ENCODE measurements at regions of chr22 and their contacts with region 1.

Region 1: GRCh38 chr22:37244114-37244921 is at the start of gene RAC2:
- DNase-seq: peak; percentile 95
- H3K4me3 Mint-ChIP-seq: peak within 1 kb of the TSS; percentile 100
- H3K27ac Mint-ChIP-seq: peak within 1 kb of the TSS; percentile 97
- H3K4me1 Mint-ChIP-seq: peaks cover 51% of the 10 kb centered on the region
- H3K27me3 Mint-ChIP-seq: no peaks in the 10 kb centered on the region
- total RNA-seq, gene RAC2: 984 to 1,005 TPM

Region 2: DNA sequence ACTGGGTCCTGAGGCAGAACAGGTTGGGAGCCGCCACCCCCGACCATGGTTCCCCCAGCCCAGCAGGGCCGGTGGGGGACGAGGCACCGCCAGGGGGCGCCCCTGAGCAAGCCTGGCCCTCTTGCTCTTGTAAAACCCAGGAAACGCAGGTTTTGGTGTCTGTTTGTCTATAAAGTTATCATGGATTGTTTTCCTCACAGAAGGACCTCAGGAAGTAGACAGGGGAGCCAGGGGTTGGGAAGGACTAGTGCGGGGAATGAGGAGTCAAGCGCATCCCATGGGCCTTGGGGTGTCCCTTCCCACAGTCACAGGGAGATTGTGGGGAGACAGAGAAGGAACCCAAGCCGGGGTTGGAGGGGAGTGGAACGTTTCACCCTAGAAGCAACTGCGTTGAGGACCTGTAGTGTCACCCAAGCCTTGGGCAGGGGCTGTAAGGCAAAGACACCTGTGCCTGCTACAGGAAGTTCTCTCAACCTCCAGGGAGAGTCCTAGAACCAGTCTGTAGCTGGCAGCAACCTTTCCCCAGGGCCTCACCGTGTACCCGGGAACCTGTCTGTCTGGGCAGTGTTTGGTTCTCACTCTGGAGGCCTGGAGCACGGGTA is 166.3 kb before region 1 on chr22:
- CTCF ChIA-PET with region 1: interaction called, 10 read pairs
- POLR2A ChIA-PET with region 1: interaction called, 50 read pairs
- DNase-seq: peak; percentile 88
- H3K4me3 Mint-ChIP-seq: peak overlapping the region; percentile 1
- H3K27ac Mint-ChIP-seq: peak overlapping the region; percentile 100
- H3K4me1 Mint-ChIP-seq: peaks cover 69% of the 10 kb centered on the region
- H3K27me3 Mint-ChIP-seq: no peaks in the 10 kb centered on the region

Region 3: DNA sequence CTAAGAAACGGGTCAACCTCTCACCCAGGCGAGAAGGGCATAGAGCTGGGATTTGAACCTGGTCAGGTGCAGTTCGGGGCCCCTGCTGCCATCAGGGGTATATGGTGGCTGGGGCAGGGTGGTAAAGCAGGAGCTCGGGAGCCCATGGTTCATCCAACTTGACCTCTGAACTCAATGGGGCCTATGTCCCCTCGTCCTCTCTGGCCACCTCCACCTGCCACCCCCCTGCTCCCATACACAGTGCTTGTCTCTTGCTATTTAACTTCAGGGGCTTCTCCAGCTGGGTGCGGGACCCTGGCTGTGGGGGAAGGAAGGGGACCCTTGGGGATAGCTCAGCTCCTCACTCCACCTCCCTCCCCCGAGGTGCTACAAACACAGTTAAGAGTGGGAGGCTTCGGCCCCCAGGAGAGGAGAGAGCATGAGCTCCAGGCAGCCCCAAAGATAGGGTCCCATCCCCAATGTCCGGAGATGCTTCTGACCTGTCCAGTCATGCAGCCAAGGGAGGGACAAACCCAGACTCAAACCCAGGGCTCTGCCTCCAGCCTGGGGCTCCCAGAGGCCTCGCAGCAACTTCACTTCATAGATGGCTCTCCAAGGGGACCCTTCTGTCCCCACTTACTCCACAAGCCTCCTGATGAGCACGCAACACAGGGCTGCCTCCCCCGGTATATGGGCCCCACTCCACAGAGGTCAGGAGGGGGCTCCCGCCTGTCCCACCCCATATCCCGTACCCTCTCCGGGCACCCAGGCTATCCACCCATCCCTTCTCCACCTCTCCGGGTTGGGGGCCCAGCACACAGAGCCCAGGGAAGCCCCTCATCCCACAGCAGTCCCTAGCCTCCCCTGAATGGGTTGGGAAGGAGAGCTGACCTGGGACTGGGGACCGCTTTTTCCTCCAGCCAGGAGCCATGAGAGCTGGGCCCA is 95.3 kb before region 1 on chr22:
- CTCF ChIA-PET with region 1: interaction called, 5 read pairs
- POLR2A ChIA-PET with region 1: interaction called, 29 read pairs
- DNase-seq: no peak
- H3K4me3 Mint-ChIP-seq: peak overlapping the region; percentile 98
- H3K27ac Mint-ChIP-seq: peak overlapping the region; percentile 89
- H3K4me1 Mint-ChIP-seq: peaks cover 59% of the 10 kb centered on the region
- H3K27me3 Mint-ChIP-seq: no peaks in the 10 kb centered on the region

Region 4: DNA sequence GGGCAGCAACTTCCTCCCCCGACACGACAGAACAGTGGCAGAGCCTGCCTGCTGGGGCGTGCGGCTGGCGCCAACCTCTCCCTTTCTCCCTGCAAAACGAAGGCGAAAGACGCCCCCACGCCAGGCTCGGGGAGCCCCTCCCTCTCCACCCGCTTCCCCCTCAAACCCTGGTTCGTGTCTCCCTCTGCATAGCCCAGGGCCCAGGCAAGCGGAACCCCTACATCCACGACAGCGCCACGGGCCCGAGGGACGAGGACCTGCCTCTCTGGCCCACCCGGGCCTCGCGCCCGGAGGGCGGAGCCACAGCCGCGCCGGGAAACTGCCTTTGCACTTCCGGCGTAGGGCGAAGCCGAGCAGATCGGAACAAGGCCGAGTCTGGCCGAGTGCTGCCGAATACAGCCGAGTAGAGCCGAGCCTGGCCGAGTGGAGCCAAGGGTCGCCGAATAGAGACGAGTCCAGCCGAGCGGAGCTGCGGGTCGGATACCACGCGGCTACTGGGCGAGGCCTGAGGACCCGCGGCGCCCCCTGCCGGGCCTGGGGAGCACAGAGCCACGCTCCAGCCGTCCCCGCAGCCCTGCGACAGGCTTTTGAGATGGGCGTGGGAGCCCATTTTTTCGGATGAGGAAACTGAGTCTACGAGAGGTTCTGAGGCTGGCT is 45.1 kb before region 1 on chr22:
- CTCF ChIA-PET with region 1: interaction called, 24 read pairs
- POLR2A ChIA-PET with region 1: interaction called, 31 read pairs
- DNase-seq: peak; percentile 100
- H3K4me3 Mint-ChIP-seq: peak overlapping the region; percentile 83
- H3K27ac Mint-ChIP-seq: peak overlapping the region; percentile 92
- H3K4me1 Mint-ChIP-seq: peaks cover 36% of the 10 kb centered on the region
- H3K27me3 Mint-ChIP-seq: no peaks in the 10 kb centered on the region

Region 5: GRCh38 chr22:37229805-37230672 is 14.3 kb before region 1 on chr22:
- CTCF ChIA-PET with region 1: interaction called, 71 read pairs
- POLR2A ChIA-PET with region 1: interaction called, 457 read pairs
- DNase-seq: peak; percentile 94
- H3K4me3 Mint-ChIP-seq: peak overlapping the region; percentile 45
- H3K27ac Mint-ChIP-seq: peak overlapping the region; percentile 97
- H3K4me1 Mint-ChIP-seq: peaks cover 90% of the 10 kb centered on the region
- H3K27me3 Mint-ChIP-seq: no peaks in the 10 kb centered on the region

Region 6: GRCh38 chr22:37273126-37273845 is 29.0 kb after region 1 on chr22:
- CTCF ChIA-PET with region 1: interaction called, 5 read pairs
- POLR2A ChIA-PET with region 1: interaction called, 54 read pairs
- DNase-seq: peak; percentile 49
- H3K4me3 Mint-ChIP-seq: no peak overlapping the region
- H3K27ac Mint-ChIP-seq: peak overlapping the region; percentile 28
- H3K4me1 Mint-ChIP-seq: peaks cover 63% of the 10 kb centered on the region
- H3K27me3 Mint-ChIP-seq: peaks cover 8% of the 10 kb centered on the region

Region 7: GRCh38 chr22:37309211-37310074 is 65.1 kb after region 1 on chr22:
- CTCF ChIA-PET with region 1: interaction called, 4 read pairs
- POLR2A ChIA-PET with region 1: interaction called, 41 read pairs
- DNase-seq: peak; percentile 80
- H3K4me3 Mint-ChIP-seq: peak overlapping the region; percentile 45
- H3K27ac Mint-ChIP-seq: peak overlapping the region; percentile 100
- H3K4me1 Mint-ChIP-seq: peaks cover 88% of the 10 kb centered on the region
- H3K27me3 Mint-ChIP-seq: no peaks in the 10 kb centered on the region

Region 8: DNA sequence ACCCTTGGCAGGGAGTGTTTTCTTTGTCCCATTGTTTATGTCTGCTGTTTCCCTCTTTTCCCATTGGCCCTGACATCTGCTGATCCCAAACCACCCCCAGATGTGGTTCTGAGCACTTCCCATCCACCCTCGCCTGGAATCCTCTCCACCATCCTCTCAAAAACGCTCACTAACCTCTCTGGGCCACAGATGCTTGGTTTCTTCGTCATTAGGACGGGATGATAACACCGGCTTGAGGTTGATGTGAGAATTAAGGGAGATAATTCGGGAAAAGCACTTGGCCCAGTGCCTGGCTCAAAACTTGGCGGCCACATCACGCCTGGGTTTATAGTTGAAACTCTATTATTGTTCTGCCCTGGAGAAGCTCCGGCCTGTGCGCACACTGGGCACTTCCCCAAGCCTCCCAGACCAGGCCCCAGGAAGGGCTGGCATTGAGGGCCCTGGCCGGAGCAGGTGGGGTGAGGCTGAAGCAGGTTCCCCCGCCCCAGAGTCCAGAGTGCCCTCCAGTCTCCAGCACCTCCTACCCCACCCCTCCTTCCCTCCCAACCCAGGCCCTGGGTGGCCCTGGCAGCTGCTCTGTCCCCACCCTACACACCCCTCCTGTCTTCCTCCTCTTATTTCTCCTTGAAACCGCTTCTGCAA is 101.7 kb after region 1 on chr22:
- CTCF ChIA-PET with region 1: no interaction called
- POLR2A ChIA-PET with region 1: no interaction called
- DNase-seq: no peak
- H3K4me3 Mint-ChIP-seq: no peak overlapping the region
- H3K27ac Mint-ChIP-seq: no peak overlapping the region
- H3K4me1 Mint-ChIP-seq: no peaks in the 10 kb centered on the region
- H3K27me3 Mint-ChIP-seq: peaks cover 11% of the 10 kb centered on the region

Measured in activated CD4-positive, alpha-beta memory T cell treated with anti-CD3 and anti-CD28 coated beads, Interleukin-2, amount 10 ng/mL, durations not matched to agents 7 days and 5 days (primary cell).